Ascending aorta (tissue), 2 donors: ENCODE measurements at regions of chr7 and their contacts with region 1.

Region 1: DNA sequence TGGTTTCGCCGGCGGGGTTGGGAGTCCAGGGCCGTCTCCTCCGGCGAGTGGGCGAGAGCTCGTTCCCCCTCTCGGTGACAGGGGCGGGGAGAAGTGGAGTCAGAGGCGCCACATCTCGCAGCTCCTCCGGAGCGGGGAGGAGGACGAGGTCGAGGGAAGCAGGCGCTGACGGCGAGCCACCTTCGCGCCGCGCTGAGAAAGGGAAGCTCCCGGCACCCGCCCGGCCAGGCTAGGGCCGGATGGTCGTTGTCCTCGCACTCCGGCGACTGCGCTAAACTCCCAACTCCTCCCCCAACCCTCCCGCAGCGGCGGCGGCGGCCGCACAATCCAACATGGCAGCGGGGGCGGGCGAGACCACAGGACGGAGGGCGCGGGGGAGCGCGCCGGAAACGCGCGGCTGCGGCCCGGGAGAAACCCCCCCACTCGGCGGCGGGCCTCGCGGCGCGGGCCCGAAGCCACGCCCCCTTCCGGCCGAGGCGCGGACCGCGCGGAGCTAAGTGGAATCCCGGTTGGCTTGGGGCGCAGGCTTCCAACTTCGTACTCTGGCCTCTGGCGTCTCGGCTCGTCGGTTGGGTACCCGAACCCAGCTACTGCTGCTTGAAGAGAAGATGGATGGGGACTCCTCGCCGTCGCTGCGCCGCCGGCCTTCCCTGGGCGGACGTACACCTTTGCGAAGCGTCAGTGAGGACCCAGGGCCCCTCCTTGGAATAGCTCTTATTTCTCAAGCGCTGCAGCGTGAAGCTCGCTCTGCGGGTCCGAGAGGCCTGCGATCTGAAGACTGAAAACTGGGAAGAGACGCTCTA is at the start of gene WASL:
- DNase-seq: peak; percentile 64 to 96
- H3K4me3 ChIP-seq: peak within 1 kb of the TSS; percentile 84 to 99
- H3K27ac ChIP-seq: peak within 1 kb of the TSS; percentile 99
- H3K4me1 ChIP-seq: peaks cover 0 to 43% of the 10 kb centered on the region in 2 donors
- H3K27me3 ChIP-seq: no peaks in the 10 kb centered on the region
- CTCF ChIP-seq: peak in 1 of 3 experiments; percentile 5
- total RNA-seq, gene WASL: 23.7 TPM

Region 2: DNA sequence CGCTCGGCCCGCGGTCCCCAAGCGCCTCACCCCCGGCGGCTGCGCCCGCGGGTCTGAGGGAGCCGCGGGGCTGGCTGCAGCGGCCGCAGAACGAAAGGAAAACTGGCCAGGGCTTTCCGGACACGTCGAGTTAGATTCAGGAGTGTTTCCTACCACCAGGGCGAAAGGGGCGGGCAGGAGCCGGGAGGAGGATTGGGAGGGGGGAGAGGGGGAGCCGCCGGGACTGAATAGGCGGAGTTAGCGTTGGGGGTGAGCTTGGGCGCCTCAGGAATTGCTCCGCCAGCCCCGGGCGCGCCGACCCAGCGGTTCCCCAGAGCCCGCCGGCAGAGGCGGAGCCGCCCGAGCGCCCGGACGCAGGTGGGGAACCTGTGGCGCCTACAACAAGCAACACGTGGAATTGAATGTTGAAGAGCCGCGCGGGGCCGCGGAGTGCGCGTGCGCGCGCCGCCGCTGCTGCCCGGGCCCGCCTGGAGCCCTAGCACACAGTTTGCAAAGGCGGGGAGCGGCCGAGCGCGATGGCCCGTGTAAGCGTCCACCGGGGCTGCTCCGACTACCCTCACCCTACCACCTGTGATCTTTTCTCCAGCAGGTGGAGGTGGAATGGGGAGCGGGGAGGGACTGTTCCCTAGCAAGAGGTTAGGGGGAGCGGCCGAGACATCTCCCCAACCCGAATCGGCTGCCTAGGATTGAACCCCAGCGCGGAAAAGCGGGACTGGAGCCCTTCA is 862.4 kb before region 1 on chr7 and contains the start of gene CADPS2:
- intact Hi-C with region 1: loop called (anchors 10 kb)
- DNase-seq: peak; percentile 31 to 86
- H3K4me3 ChIP-seq: peak within 1 kb of the TSS; percentile 92 to 96
- H3K27ac ChIP-seq: peak within 1 kb of the TSS; percentile 92 to 94
- H3K4me1 ChIP-seq: peaks cover 0 to 3% of the 10 kb centered on the region in 2 donors
- H3K27me3 ChIP-seq: no peaks in the 10 kb centered on the region
- CTCF ChIP-seq: peak in 2 of 3 experiments; percentile 21 to 27
- total RNA-seq, gene CADPS2: 31.8 TPM

Region 3: DNA sequence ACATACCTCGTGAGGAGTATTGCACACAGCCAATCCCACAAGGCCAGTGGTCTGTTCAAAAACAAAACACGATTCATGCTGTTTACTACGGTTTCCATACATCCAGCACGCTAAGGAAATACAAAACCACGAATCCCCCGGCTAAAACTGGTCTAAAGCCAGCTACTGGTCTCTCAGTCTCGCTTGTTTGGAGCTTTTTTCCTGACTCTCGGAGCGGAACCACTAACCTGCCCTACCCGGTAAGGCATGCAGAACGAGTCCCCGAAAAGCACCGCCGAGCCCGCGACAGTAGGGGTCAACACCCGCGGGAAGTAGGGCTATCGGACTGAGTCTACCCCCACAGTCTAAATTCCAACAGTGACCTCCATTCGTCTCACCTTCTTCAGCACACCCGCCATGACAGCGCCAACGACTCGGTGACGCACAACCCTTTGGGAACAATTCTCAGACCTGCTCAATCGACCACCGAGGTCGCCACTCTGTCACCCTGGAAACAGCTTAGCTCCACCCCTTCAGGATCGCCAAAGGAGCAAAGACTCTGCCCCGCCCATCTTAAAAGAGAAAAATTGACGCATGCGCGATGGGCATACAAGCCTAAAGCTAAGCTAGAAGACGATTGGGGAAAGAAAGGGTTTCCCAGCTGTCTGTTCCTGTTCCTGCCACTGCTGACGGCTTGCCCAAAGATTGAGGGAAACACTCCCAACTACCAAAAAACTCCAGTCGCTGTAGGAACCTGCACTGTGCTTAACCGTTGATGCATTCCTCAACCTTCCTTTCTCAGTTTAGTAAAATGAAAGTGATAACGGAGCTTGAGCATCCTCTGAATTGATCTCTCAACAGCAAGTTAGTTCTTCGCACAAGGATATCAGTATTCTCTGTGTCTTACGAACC is 191.3 kb before region 1 on chr7 and contains the start of gene NDUFA5:
- intact Hi-C with region 1: loop called (anchors 1 kb)
- DNase-seq: peak; percentile 94 to 99
- H3K4me3 ChIP-seq: peak within 1 kb of the TSS; percentile 81 to 86
- H3K27ac ChIP-seq: peak within 1 kb of the TSS; percentile 77 to 85
- H3K4me1 ChIP-seq: peaks cover 0 to 12% of the 10 kb centered on the region in 2 donors
- H3K27me3 ChIP-seq: no peaks in the 10 kb centered on the region
- CTCF ChIP-seq: no peak
- total RNA-seq, gene NDUFA5: 20.1 TPM

Region 4: GRCh38 chr7:123643495-123644441 is 105.2 kb before region 1 on chr7:
- intact Hi-C with region 1: no loop called
- DNase-seq: no peak
- H3K4me3 ChIP-seq: peak overlapping the region; percentile 11 to 21
- H3K27ac ChIP-seq: no peak overlapping the region
- H3K4me1 ChIP-seq: peaks cover 0 to 7% of the 10 kb centered on the region in 2 donors
- H3K27me3 ChIP-seq: no peaks in the 10 kb centered on the region
- CTCF ChIP-seq: no peak

Region 5: DNA sequence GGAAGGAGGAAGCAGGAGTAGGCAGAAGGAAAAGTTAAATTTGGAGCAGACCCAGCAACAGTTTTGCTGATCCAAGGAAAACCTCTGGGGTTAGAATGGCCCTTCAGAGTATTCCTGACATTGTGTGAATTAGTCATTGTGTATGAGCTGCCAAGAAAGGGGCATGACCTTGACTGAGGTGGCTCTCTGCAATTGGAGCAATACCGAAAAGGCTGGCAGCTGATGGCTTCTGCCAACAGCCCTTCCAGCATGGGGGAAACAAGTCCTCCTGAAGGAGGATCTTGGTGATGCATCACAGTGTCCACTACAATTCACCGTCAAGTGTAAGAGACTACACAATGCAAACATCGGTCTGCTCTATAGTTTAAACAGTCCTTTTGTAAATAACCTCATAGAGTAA is 20.4 kb after region 1 on chr7:
- intact Hi-C with region 1: loop called (anchors 2 kb)
- DNase-seq: peak in 1 of 2 donors; percentile 77
- H3K4me3 ChIP-seq: peak overlapping the region in 1 of 2 donors; percentile 8
- H3K27ac ChIP-seq: no peak overlapping the region
- H3K4me1 ChIP-seq: no peaks in the 10 kb centered on the region
- H3K27me3 ChIP-seq: no peaks in the 10 kb centered on the region
- CTCF ChIP-seq: no peak